Thyroid gland (tissue), 4 donors: ENCODE measurements at regions of chr1 and their contacts with region 1.

Region 1: GRCh38 chr1:243301059-243301458 is 45.2 kb downstream of the SDCCAG8 start:
- DNase-seq: no peak
- H3K4me3 ChIP-seq: no peak overlapping the region
- H3K27ac ChIP-seq: no peak overlapping the region
- H3K4me1 ChIP-seq: peaks cover 0 to 9% of the 10 kb centered on the region in 2 donors
- H3K27me3 ChIP-seq: no peaks in the 10 kb centered on the region
- CTCF ChIP-seq: no peak
- POLR2A ChIP-seq: no peak

Region 2: DNA sequence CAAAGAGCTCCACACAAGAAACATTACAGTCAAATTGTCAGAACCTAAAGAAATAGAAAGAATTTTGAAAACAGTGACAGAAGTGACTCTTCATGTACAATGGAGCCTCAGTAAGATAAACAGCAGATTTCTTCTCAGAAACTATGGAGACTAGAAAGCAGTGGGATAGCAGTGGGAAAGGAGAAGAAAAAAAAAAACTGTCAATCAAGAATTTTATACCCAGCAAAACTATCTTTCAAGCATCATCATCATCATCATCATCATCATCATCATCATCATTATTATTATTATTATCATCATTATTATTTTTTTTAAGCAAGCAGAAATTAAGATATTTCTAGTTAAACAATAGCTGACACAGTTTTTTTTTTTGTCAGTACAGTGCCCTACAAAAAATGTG is 70.1 kb before region 1 on chr1:
- intact Hi-C with region 1: loop called (anchors 10 kb)
- DNase-seq: no peak
- H3K4me3 ChIP-seq: no peak overlapping the region
- H3K27ac ChIP-seq: no peak overlapping the region
- H3K4me1 ChIP-seq: peaks cover 8 to 31% of the 10 kb centered on the region in 2 donors
- H3K27me3 ChIP-seq: no peaks in the 10 kb centered on the region
- CTCF ChIP-seq: no peak
- POLR2A ChIP-seq: no peak

Region 3: DNA sequence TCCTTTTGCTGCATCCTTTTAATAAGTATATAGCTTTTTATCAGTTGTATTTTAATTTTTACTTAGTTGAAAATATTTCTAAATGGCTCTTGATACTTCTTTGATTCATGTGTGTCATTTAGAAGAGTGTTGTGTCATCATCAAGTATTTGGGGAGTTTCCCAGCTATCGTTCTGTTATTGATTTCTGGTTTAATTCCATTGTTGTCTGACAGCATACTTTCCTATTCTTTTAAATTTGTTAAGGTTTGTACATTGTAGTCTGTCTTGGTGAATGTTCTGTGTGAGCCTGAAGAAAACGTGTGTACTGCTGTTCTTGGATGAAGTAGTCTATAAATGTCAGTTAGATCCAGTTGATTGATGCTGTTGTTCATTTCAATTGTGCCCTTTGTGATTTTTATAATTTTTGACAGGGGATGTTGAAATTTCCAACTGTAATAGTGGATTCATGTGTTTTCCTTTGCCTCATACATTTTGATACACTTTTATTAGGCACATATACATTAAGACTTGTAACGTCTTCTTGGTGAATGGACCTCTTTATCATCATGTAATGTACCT is 20.4 kb before region 1 on chr1:
- intact Hi-C with region 1: no loop called
- DNase-seq: no peak
- H3K4me3 ChIP-seq: no peak overlapping the region
- H3K27ac ChIP-seq: no peak overlapping the region
- H3K4me1 ChIP-seq: no peaks in the 10 kb centered on the region
- H3K27me3 ChIP-seq: no peaks in the 10 kb centered on the region
- CTCF ChIP-seq: no peak
- POLR2A ChIP-seq: no peak

Region 4: GRCh38 chr1:243421784-243422183 is 120.7 kb after region 1 on chr1:
- intact Hi-C with region 1: no loop called
- DNase-seq: peak; percentile 22 to 47
- H3K4me3 ChIP-seq: no peak overlapping the region
- H3K27ac ChIP-seq: no peak overlapping the region
- H3K4me1 ChIP-seq: no peaks in the 10 kb centered on the region
- H3K27me3 ChIP-seq: no peaks in the 10 kb centered on the region
- CTCF ChIP-seq: no peak
- POLR2A ChIP-seq: no peak